Gastrocnemius medialis (tissue), 4 donors: ENCODE measurements at regions of chr12 and their contacts with region 1.

Region 1: GRCh38 chr12:4320853-4321701 is at the start of gene TIGAR:
- DNase-seq: peak; percentile 87 to 91
- ATAC-seq: peak; percentile 92 to 96
- H3K4me3 ChIP-seq: peak within 1 kb of the TSS; percentile 84 to 94 (median 92)
- H3K27ac ChIP-seq: peak within 1 kb of the TSS; percentile 88 to 95 (median 92)
- H3K4me1 ChIP-seq: peaks cover 13 to 19% of the 10 kb centered on the region in 2 donors
- H3K27me3 ChIP-seq: no peaks in the 10 kb centered on the region
- CTCF ChIP-seq: no peak
- POLR2A ChIP-seq: peak; percentile 91
- total RNA-seq, gene TIGAR: 4.4 to 8.3 (median 6.7) TPM

Region 2: GRCh38 chr12:4153343-4153892 is 167.7 kb before region 1 on chr12:
- in situ Hi-C with region 1: no loop called
- intact Hi-C with region 1: no loop called
- DNase-seq: no peak
- ATAC-seq: no peak
- H3K4me3 ChIP-seq: no peak overlapping the region
- H3K27ac ChIP-seq: no peak overlapping the region
- H3K4me1 ChIP-seq: no peaks in the 10 kb centered on the region
- H3K27me3 ChIP-seq: peaks cover 0 to under 1% (median 0%) of the 10 kb centered on the region in 3 donors
- CTCF ChIP-seq: no peak
- POLR2A ChIP-seq: no peak

Region 3: GRCh38 chr12:4423528-4424195 is 102.6 kb after region 1 on chr12:
- in situ Hi-C with region 1: no loop called
- intact Hi-C with region 1: no loop called
- DNase-seq: no peak
- ATAC-seq: no peak
- H3K4me3 ChIP-seq: no peak overlapping the region
- H3K27ac ChIP-seq: no peak overlapping the region
- H3K4me1 ChIP-seq: no peaks in the 10 kb centered on the region
- H3K27me3 ChIP-seq: peaks cover 0 to 3% (median under 1%) of the 10 kb centered on the region in 3 donors
- CTCF ChIP-seq: no peak
- POLR2A ChIP-seq: no peak

Region 4: GRCh38 chr12:4434706-4435425 is 113.8 kb after region 1 on chr12:
- in situ Hi-C with region 1: no loop called
- intact Hi-C with region 1: loop called (anchors 5 kb)
- DNase-seq: no peak
- ATAC-seq: no peak
- H3K4me3 ChIP-seq: no peak overlapping the region
- H3K27ac ChIP-seq: peak overlapping the region; percentile 77 to 88 (median 81)
- H3K4me1 ChIP-seq: peaks cover 31 to 38% of the 10 kb centered on the region in 2 donors
- H3K27me3 ChIP-seq: no peaks in the 10 kb centered on the region
- CTCF ChIP-seq: no peak
- POLR2A ChIP-seq: no peak

Region 5: GRCh38 chr12:4538207-4539160 is 217.4 kb after region 1 on chr12 and contains the start of gene RAD51AP1:
- in situ Hi-C with region 1: loop called in 2 of 4 experiments (anchors 25 kb)
- intact Hi-C with region 1: loop called (anchors 1 kb)
- DNase-seq: peak; percentile 87 to 90
- ATAC-seq: peak; percentile 99
- H3K4me3 ChIP-seq: peak within 1 kb of the TSS; percentile 55 to 92 (median 76)
- H3K27ac ChIP-seq: peak within 1 kb of the TSS; percentile 86 to 94 (median 92)
- H3K4me1 ChIP-seq: peaks cover 15 to 16% of the 10 kb centered on the region in 2 donors
- H3K27me3 ChIP-seq: no peaks in the 10 kb centered on the region
- CTCF ChIP-seq: no peak
- POLR2A ChIP-seq: peak; percentile 35 to 51
- total RNA-seq, gene RAD51AP1: 0.65 to 1.7 (median 1.7) TPM in 3 of 4 donors, not detected in the other

Region 6: DNA sequence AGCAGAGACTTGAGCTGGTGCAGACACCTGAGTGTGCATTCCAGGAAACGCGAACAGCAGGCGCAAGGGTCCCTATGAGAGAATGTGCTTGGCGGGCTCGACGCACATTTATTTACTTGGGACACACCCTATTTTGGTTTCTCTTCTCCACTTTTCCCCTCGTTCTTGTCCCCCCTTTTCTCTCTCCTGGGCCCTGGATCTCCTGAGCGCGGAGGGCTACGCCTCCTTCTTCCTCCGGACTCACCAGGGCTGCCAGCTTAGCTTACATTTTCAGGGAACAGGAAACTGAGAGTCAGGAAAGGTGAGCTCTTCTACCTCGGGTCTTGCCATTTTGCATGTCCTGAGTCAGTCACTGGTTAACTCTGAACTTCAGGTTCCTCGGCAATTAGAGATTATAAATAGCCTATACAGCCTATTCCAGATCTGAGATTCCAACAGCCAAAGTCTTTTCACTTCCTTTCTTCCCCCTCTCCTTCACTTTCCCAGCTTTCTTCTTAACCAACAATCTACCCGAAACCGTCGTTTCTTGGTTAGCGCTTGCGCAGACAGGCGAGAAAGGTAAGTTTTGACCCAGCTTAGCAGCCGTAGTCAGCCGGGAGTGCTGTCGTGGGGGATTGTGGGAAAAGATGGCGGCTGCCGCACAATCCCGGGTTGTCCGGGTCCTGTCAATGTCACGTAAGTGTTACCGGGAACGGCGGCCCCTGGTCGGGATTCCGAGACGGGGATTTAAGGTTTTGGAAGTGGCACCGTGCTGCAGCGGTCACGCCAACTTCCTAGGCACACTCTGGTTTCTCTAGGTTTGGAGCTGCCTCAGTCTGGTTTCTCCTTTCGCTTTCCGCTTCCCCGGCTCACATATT is 327.7 kb after region 1 on chr12 and contains the starts of genes AKAP3 and NDUFA9:
- in situ Hi-C with region 1: no loop called
- intact Hi-C with region 1: loop called (anchors 10 kb)
- DNase-seq: peak; percentile 72 to 78
- ATAC-seq: peak; percentile 97
- H3K4me3 ChIP-seq: peak within 1 kb of the TSS; percentile 72 to 90 (median 80)
- H3K27ac ChIP-seq: peak within 1 kb of the TSS; percentile 79 to 92 (median 89)
- H3K4me1 ChIP-seq: peaks cover 44 to 45% of the 10 kb centered on the region in 2 donors
- H3K27me3 ChIP-seq: no peaks in the 10 kb centered on the region
- CTCF ChIP-seq: no peak
- POLR2A ChIP-seq: peak; percentile 34 to 47
- total RNA-seq, gene AKAP3: 0.27 to 1.7 (median 0.71) TPM
- total RNA-seq, gene NDUFA9: 57.9 to 113 (median 69.5) TPM